Gastrocnemius medialis (tissue), 4 donors: ENCODE measurements at regions of chr11 and their contacts with region 1.

Region 1: GRCh38 chr11:64298966-64299846 is 952 bp upstream of the CATSPERZ start:
- DNase-seq: peak; percentile 36 to 64
- ATAC-seq: peak; percentile 52 to 59
- H3K4me3 ChIP-seq: peak overlapping the region; percentile 46 to 76 (median 58)
- H3K27ac ChIP-seq: no peak overlapping the region
- H3K4me1 ChIP-seq: peaks cover 6 to 16% of the 10 kb centered on the region in 2 donors
- H3K27me3 ChIP-seq: peaks cover 65 to 72% (median 68%) of the 10 kb centered on the region in 3 donors
- CTCF ChIP-seq: no peak
- POLR2A ChIP-seq: no peak

Region 2: GRCh38 chr11:64148200-64148916 is 150.8 kb before region 1 on chr11:
- in situ Hi-C with region 1: no loop called
- intact Hi-C with region 1: no loop called
- DNase-seq: peak; percentile 44 to 70
- ATAC-seq: peak; percentile 50 to 57
- H3K4me3 ChIP-seq: peak overlapping the region; percentile 26 to 45 (median 30)
- H3K27ac ChIP-seq: peak overlapping the region; percentile 35 to 96 (median 66)
- H3K4me1 ChIP-seq: peaks cover 44 to 69% of the 10 kb centered on the region in 2 donors
- H3K27me3 ChIP-seq: no peaks in the 10 kb centered on the region
- CTCF ChIP-seq: peak; percentile 86 to 96 (median 94)
- POLR2A ChIP-seq: no peak

Region 3: DNA sequence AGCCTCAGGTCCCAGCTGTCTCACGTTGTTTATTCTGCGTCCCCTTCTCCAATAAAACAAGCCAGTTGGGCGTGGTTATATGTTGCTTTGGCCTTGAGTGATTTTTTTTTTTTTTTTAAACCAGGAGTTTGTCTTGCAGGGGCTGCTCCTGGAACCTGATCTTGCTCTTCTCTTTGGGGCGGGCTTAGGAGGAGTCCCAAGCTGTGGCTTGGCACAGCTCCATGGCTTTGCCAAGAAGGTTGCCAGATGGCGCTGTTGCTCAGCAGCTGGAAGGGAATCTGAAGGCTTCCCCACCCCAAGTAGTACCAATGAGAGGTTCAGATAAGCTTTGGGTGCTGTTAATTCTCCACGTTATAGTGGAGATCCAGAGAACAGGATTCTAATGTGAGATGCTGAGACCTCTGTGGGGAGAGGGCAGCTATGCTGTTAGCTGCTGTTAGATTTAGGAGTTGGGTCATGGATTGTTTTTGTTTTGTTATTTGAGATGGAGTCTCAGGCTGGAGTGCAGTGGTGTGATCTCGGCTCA is 94.7 kb before region 1 on chr11:
- in situ Hi-C with region 1: loop called in 3 of 4 experiments (anchors 5 kb)
- intact Hi-C with region 1: loop called (anchors 1 kb)
- DNase-seq: peak; percentile 76 to 88
- ATAC-seq: peak; percentile 92 to 96
- H3K4me3 ChIP-seq: no peak overlapping the region
- H3K27ac ChIP-seq: peak overlapping the region; percentile 24 to 78 (median 26)
- H3K4me1 ChIP-seq: peaks cover 17 to 22% of the 10 kb centered on the region in 2 donors
- H3K27me3 ChIP-seq: no peaks in the 10 kb centered on the region
- CTCF ChIP-seq: peak; percentile 55 to 80 (median 69)
- POLR2A ChIP-seq: no peak

Region 4: DNA sequence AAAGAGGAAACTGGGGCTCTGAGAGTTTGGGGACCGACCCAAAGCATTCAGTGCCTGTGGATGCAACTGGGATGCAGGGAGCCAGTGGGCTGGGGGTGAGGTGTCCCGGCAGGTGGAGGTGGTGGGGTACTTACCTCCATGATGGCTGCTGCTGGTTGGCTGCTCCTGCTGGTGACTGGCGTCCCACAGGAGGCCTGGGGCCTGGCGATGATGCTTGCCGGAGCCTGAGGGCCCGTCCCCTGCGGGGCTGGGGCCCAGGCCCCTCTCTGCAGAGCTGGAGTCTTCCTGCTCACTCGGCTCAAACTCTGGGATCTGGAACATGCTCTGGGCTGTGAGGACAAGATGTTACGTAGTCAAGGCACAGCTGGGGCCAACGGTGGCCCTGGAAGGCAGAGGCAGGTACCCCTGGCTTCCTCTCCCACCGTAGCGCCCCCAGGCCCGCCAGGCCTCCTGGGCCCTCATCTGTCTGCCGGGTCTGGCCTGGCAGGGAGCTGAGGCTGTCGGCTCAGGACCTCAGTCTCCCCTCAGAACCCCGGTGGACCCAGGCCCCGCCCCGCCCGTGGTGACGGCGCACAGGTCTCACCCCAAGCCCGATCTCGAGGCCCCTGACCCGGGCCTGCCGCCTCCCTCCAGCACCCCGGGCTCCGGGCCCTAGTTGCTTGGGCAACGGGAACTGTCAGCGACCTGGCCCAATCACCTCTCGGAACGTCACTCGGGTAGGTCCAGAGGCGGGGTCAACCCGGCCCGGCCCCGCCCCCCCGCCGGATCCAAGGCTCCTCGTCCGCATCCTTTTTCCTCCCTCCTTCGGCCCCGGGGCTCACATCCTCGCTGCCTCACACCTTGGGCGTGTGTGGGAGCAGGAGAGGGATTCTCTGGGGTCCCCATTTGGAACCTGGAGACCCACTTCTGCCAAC is 14.9 kb before region 1 on chr11 and contains the start of gene BAD:
- in situ Hi-C with region 1: no loop called
- intact Hi-C with region 1: loop called (anchors 1 kb)
- DNase-seq: peak; percentile 94 to 95
- ATAC-seq: peak; percentile 87
- H3K4me3 ChIP-seq: peak within 1 kb of the TSS; percentile 84 to 97 (median 90)
- H3K27ac ChIP-seq: peak within 1 kb of the TSS; percentile 90 to 97 (median 94)
- H3K4me1 ChIP-seq: peaks cover 22 to 25% of the 10 kb centered on the region in 2 donors
- H3K27me3 ChIP-seq: no peaks in the 10 kb centered on the region
- CTCF ChIP-seq: no peak
- POLR2A ChIP-seq: peak; percentile 80 to 81
- total RNA-seq, gene BAD: 27.8 to 88.0 (median 76.3) TPM